A549 (cell line): ENCODE measurements at regions of chr3 and their contacts with region 1.

Region 1: DNA sequence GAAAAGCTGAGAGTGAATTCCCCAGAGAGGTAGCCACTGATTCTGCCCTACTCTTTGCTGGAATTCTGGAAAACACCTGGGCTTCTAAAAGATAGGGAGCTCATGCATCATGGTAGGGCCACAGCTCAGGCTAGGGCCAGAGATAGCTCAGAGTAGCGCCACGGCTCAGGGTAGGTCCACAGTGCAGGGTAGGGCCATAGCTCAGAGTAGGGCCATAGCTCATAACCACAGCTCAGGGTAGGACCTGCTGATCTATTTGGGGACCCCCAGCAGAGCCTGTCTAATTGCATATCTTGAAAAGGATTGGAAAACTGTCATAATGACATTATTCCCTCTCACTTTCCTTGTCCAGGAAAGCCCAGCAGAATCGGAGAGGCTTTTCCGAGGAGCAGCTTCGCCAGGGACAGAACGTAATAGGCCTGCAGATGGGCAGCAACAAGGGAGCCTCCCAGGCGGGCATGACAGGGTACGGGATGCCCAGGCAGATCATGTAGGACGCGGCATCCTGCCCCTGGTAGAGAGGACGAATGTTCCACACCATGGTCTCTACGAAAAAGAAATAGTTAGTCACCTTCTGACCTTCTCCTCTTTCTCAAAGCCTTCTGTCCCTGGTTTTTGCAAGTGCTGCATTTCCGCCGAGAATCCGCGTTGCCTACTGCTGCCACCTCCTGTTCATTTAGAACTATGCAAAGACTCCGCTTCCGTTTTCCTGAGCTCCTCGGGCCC is 14.5 kb downstream of the TAGLN3 start:
- DNase-seq: peak; percentile 56 to 79
- ATAC-seq: peak; percentile 90 to 96
- H3K4me3 ChIP-seq: no peak overlapping the region
- H3K27ac ChIP-seq: peak overlapping the region in 1 of 2 experiments; percentile 58; a peak in 3 of 6 replicates
- H3K4me1 ChIP-seq: 0 out of 3 replicates have a peak, but pooled peaks cover 5% of the 10 kb centered on the region
- CTCF ChIP-seq: peak; percentile 88
- EP300 ChIP-seq: no peak
- POLR2A ChIP-seq: no peak
- RAD21 ChIP-seq: peak; percentile 82 to 85

Region 2: DNA sequence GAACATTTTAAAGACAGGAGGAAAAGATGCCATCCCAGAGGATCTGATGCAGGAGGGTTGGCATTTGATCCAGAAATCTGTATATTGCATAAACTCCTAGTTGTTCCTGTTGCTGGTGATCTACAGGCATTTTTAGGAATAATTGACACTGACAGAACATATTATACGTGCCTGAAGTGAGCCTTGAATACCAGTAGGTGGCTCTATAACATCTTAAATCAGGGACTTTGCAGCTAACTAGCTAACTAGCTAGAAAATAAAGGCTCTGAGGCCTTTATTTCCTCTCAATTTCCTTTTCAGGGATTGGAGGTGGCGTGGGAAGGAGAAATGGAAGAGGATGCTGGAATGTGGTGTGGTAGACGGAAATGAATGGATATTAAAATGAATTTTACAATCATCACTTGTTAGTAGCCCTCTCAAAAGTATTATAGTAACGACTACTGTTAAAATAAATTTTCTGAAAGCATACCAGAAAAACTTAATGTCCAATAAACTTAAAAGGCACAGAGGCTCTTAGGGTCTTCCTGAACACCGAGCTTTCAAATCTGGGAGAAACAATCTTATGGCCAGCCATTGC is 344.2 kb before region 1 on chr3:
- CTCF ChIA-PET with region 1: interaction called, 27 read pairs
- POLR2A ChIA-PET with region 1: no interaction called
- DNase-seq: peak; percentile 55 to 72
- ATAC-seq: peak; percentile 76 to 90
- H3K4me3 ChIP-seq: no peak overlapping the region
- H3K27ac ChIP-seq: peak overlapping the region; percentile 43 to 64; a peak in 5 of 6 replicates
- H3K4me1 ChIP-seq: peaks cover 37% of the 10 kb centered on the region
- CTCF ChIP-seq: peak; percentile 86
- EP300 ChIP-seq: no peak
- POLR2A ChIP-seq: no peak
- RAD21 ChIP-seq: peak; percentile 91

Region 3: DNA sequence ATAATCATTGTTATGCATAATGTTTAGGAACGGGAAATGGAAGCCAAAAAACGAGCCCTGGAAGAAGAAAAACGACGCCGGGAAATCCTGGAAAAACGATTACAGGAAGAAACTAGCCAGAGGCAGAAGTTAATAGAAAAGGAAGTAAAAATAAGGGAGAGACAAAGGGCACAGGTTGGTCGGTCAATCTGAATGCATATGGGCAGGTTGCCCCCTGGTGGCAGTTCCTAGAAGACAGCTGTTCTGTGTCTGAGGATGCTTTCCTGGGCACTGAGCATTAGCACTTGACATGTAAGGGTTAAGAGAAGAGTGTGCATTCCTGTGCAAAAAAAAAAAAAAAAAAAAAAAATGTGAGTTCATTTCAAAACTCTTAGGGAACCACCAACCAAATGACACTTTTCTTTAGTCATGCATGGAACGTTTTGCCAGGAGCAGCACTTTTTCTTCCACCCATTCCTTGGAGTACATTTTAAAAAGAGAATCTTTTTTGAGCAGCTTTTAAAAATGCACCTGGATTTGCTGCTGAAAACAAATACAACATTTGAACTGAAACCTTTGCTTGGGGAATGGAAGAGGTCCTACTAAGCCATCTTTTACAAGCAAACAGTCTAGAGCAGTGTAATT is 45.5 kb before region 1 on chr3:
- CTCF ChIA-PET with region 1: interaction called, 11 read pairs
- POLR2A ChIA-PET with region 1: no interaction called
- DNase-seq: peak; percentile 31 to 84
- ATAC-seq: peak; percentile 92 to 97
- H3K4me3 ChIP-seq: no peak overlapping the region
- H3K27ac ChIP-seq: peak overlapping the region; percentile 50 to 79
- H3K4me1 ChIP-seq: peaks cover 25% of the 10 kb centered on the region
- CTCF ChIP-seq: peak; percentile 92
- EP300 ChIP-seq: no peak
- POLR2A ChIP-seq: no peak
- RAD21 ChIP-seq: peak; percentile 95 to 98

Region 4: GRCh38 chr3:111978493-111979433 is 34.5 kb before region 1 on chr3 and contains the start of gene ABHD10:
- CTCF ChIA-PET with region 1: interaction called, 16 read pairs
- POLR2A ChIA-PET with region 1: interaction called, 15 read pairs
- DNase-seq: peak; percentile 87 to 99
- ATAC-seq: peak; percentile 96 to 98
- H3K4me3 ChIP-seq: peak within 1 kb of the TSS; percentile 62
- H3K27ac ChIP-seq: peak within 1 kb of the TSS; percentile 84 to 94
- H3K4me1 ChIP-seq: peaks cover 32% of the 10 kb centered on the region
- CTCF ChIP-seq: no peak
- EP300 ChIP-seq: no peak
- POLR2A ChIP-seq: peak; percentile 97
- RAD21 ChIP-seq: no peak
- polyA plus RNA-seq, gene ABHD10: 39.7 and 42.1 TPM in 2 replicates

Region 5: GRCh38 chr3:111998636-111999483 is 14.4 kb before region 1 on chr3 and contains the start of gene TAGLN3:
- CTCF ChIA-PET with region 1: interaction called, 189 read pairs
- POLR2A ChIA-PET with region 1: no interaction called
- DNase-seq: no peak
- ATAC-seq: no peak
- H3K4me3 ChIP-seq: no peak within 1 kb of the TSS
- H3K27ac ChIP-seq: no peak within 1 kb of the TSS
- H3K4me1 ChIP-seq: no peaks in the 10 kb centered on the region; the same call in 2 of the 3 replicates
- CTCF ChIP-seq: no peak
- EP300 ChIP-seq: no peak
- POLR2A ChIP-seq: no peak
- RAD21 ChIP-seq: no peak
- polyA plus RNA-seq, gene TAGLN3: not detected in 2 replicates

Region 6: GRCh38 chr3:112043603-112044201 is 30.5 kb after region 1 on chr3:
- CTCF ChIA-PET with region 1: interaction called, 113 read pairs
- POLR2A ChIA-PET with region 1: no interaction called
- DNase-seq: peak; percentile 73 to 82
- ATAC-seq: peak; percentile 96 to 99
- H3K4me3 ChIP-seq: no peak overlapping the region
- H3K27ac ChIP-seq: no peak overlapping the region
- H3K4me1 ChIP-seq: peaks cover 11% of the 10 kb centered on the region; the same call in 1 of the 3 replicates
- CTCF ChIP-seq: peak; percentile 92
- EP300 ChIP-seq: no peak
- POLR2A ChIP-seq: no peak
- RAD21 ChIP-seq: peak; percentile 80 to 81